PC-9 (cell line): ENCODE measurements at regions of chr16 and their contacts with region 1.

Region 1: GRCh38 chr16:84941914-84942313 is 69.4 kb downstream of the ZDHHC7 start:
- DNase-seq: peak; percentile 43 to 65
- H3K4me3 ChIP-seq: no peak overlapping the region
- H3K27ac ChIP-seq: no peak overlapping the region
- H3K4me1 ChIP-seq: peaks cover 8% of the 10 kb centered on the region
- H3K27me3 ChIP-seq: no peaks in the 10 kb centered on the region
- CTCF ChIP-seq: no peak

Region 2: GRCh38 chr16:84925092-84925772 is 16.7 kb before region 1 on chr16:
- CTCF ChIA-PET with region 1: interaction called, 14 read pairs
- POLR2A ChIA-PET with region 1: no interaction called
- intact Hi-C with region 1: no loop called
- DNase-seq: peak in 1 of 2 experiments; percentile 53
- H3K4me3 ChIP-seq: no peak overlapping the region
- H3K27ac ChIP-seq: no peak overlapping the region
- H3K4me1 ChIP-seq: no peaks in the 10 kb centered on the region
- H3K27me3 ChIP-seq: no peaks in the 10 kb centered on the region
- CTCF ChIP-seq: peak; percentile 98